Right ventricle myocardium inferior (tissue), 1 donor: ENCODE measurements at regions of chr13 and their contacts with region 1.

Region 1: DNA sequence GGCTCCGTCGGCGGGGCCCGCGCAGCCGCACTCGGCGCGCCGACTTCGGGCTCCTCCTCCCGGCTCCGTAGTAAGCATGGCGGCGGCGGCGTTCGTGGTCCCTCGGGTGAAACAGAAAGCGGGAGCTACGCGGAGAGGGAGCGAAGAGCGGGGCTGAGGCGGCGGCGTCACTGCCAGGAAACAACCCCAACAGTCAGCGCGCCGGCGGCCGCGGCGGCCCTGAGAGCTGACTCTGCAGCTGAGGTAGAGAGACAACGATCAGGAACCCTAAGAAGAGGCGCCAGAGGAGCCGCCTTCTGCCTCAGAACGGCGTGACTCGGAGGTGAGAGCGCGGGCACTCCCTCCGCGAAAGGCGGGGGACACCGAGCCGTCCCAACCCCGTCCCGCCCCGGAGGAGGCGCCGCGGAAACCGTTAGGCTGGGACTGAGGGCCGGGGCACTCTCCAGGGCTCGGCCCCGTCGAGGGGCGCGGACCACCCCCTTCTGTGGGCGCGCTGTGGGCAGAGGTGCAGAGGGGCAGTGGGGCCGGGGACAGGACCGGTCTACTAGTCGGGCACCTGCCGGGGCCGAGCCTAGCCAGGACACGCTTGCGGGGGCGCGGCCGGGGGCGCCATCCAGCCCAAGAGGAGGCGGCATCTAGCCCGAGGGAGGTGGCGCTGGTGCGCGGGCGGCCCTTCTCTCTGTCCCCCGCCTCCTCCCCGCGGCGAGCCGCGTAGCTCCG is at the start of gene FNDC3A:
- DNase-seq: peak; percentile 96
- ATAC-seq: peak; percentile 94
- total RNA-seq, gene FNDC3A: 18.4 TPM

Region 2: GRCh38 chr13:48783181-48783630 is 192.8 kb before region 1 on chr13:
- intact Hi-C with region 1: loop called (anchors 10 kb)
- DNase-seq: peak; percentile 88
- ATAC-seq: peak; percentile 85

Region 3: GRCh38 chr13:48873587-48873986 is 102.4 kb before region 1 on chr13:
- intact Hi-C with region 1: loop called (anchors 5 kb)
- DNase-seq: no peak
- ATAC-seq: peak; percentile 18

Region 4: GRCh38 chr13:49110122-49110912 is 134.3 kb after region 1 on chr13:
- intact Hi-C with region 1: loop called (anchors 5 kb)
- DNase-seq: peak; percentile 90
- ATAC-seq: peak; percentile 84

Region 5: DNA sequence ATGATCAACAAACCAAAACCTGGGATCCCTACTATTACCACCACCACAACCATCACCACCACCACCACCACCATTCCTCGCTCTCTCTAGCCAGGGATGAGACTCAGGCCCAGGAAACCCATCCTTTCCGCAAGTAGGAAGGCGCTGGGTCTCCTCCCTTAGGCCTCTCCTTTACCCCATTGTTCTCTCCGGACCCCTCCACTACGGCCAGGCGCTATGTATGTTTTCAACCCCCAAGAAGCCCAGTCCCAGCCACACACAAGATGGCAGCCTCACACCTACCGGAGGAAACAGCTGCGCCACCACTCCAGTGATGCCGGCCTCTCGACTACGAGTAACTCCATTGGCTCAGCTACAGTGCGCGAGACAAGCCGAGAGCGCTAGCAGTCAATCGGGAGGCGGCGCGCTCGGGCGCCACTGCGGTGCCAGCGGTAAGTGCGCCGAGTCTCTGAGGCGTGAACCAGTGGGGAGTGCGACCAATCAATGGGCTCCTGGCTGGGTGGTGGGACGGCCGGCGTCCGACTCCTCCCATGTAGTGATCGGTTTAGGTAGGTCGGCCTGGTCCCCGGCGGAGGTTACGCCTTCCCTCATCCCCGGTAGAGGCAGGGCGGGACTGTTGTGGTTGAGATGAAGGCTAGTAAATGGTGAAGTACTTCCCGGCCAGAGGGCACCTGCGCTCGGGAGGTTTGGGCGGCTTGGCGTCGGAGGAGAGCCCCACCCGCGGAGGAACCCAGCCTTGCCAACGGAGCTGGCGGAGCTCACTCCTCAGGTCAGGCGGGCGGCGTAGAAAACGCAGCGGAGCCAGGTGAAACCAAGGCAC is 467.9 kb after region 1 on chr13 and contains the starts of genes CAB39L and SETDB2:
- intact Hi-C with region 1: loop called (anchors 5 kb)
- DNase-seq: peak; percentile 100
- ATAC-seq: peak; percentile 99
- total RNA-seq, gene CAB39L: 22.1 TPM
- total RNA-seq, gene SETDB2: 13.1 TPM